Left lung (tissue), 14 donors: ENCODE measurements at regions of chr7 and their contacts with region 1.

Region 1: DNA sequence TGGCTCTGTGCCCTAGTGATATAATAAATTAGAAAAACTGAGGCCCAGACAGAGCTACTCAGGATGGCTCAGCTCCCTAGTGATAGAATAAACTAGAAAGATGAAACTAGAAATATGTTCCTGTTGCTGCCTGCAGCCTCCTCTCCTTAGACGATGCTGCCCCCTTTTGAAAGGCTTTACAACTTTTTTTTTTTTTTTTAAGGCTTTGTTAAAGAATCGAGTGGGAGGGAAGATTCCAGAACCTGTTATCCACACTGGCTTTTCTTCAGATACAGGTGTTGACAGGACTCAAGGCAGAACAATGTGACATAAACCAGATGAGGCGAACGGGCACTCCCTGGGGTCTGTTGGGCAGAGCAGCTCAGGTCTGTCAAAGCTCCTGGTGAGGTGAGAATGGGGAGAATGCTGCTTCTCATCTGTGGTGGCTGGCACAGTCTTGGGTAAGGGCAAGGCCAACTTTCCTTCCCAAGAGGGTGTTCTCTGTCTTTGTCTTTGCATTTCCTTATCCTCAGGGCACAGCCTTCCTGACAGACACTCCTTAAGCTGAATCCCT is 175.1 kb downstream of the COBL start:
- DNase-seq: peak in 1 of 4 donors; percentile 34
- ATAC-seq: peak; percentile 73
- H3K4me3 ChIP-seq: no peak overlapping the region
- H3K27ac ChIP-seq: no peak overlapping the region
- H3K4me1 ChIP-seq: no peaks in the 10 kb centered on the region
- H3K27me3 ChIP-seq: no peaks in the 10 kb centered on the region
- CTCF ChIP-seq: peak in 1 of 2 donors; percentile 38

Region 2: GRCh38 chr7:50467817-50468610 is 673.5 kb before region 1 on chr7:
- intact Hi-C with region 1: loop called in 1 of 2 experiments (anchors 10 kb)
- DNase-seq: peak; percentile 56 to 92 (median 76)
- ATAC-seq: peak; percentile 98
- H3K4me3 ChIP-seq: no peak overlapping the region
- H3K27ac ChIP-seq: no peak overlapping the region
- H3K4me1 ChIP-seq: peaks cover 6 to 8% of the 10 kb centered on the region in 2 donors
- H3K27me3 ChIP-seq: no peaks in the 10 kb centered on the region
- CTCF ChIP-seq: peak; percentile 80 to 86

Region 3: GRCh38 chr7:51209426-51209825 is 67.9 kb after region 1 on chr7:
- intact Hi-C with region 1: no loop called
- DNase-seq: no peak
- ATAC-seq: no peak
- H3K4me3 ChIP-seq: no peak overlapping the region
- H3K27ac ChIP-seq: no peak overlapping the region
- H3K4me1 ChIP-seq: no peaks in the 10 kb centered on the region
- H3K27me3 ChIP-seq: no peaks in the 10 kb centered on the region
- CTCF ChIP-seq: no peak